Psoas muscle (tissue), 8 donors: ENCODE measurements at regions of chr18 and their contacts with region 1.

Region 1: GRCh38 chr18:26993568-26993967 is 128.1 kb upstream of the AQP4 start:
- DNase-seq: no peak
- ATAC-seq: no peak
- H3K4me3 ChIP-seq: no peak overlapping the region
- H3K27ac ChIP-seq: no peak overlapping the region
- H3K4me1 ChIP-seq: no peaks in the 10 kb centered on the region
- H3K27me3 ChIP-seq: no peaks in the 10 kb centered on the region
- CTCF ChIP-seq: no peak

Region 2: DNA sequence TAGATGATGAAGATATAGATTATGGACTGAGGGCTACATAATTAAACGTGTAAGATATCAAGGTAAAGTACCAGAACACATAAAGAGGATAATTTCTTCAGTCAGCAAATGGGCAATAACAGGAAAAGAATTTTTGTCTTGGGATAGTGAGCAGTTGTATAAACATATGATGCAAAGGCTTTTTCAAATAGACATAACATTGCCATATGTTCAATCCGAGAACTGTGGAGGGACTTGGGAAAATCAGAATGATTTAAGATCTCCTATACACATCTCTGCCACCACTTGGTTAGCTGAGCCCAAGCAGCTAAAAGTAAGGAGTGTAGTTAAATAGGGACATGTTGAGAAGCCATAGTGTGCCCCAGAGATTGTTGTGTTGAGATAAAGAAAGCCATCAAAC is 1354.0 kb before region 1 on chr18:
- intact Hi-C with region 1: loop called in 1 of 2 experiments (anchors 5 kb)
- DNase-seq: no peak
- ATAC-seq: no peak
- H3K4me3 ChIP-seq: no peak overlapping the region
- H3K27ac ChIP-seq: no peak overlapping the region
- H3K4me1 ChIP-seq: no peaks in the 10 kb centered on the region
- H3K27me3 ChIP-seq: no peaks in the 10 kb centered on the region
- CTCF ChIP-seq: no peak

Region 3: GRCh38 chr18:26821181-26821580 is 172.4 kb before region 1 on chr18:
- intact Hi-C with region 1: loop called in 1 of 2 experiments (anchors 5 kb)
- DNase-seq: no peak
- ATAC-seq: no peak
- H3K4me3 ChIP-seq: no peak overlapping the region
- H3K27ac ChIP-seq: no peak overlapping the region
- H3K4me1 ChIP-seq: no peaks in the 10 kb centered on the region
- H3K27me3 ChIP-seq: no peaks in the 10 kb centered on the region
- CTCF ChIP-seq: no peak

Region 4: GRCh38 chr18:27143580-27144287 is 150.2 kb after region 1 on chr18:
- intact Hi-C with region 1: no loop called
- DNase-seq: peak in 1 of 2 donors; percentile 14
- ATAC-seq: peak in 3 of 4 donors; percentile 54 to 65 (median 58)
- H3K4me3 ChIP-seq: no peak overlapping the region
- H3K27ac ChIP-seq: no peak overlapping the region
- H3K4me1 ChIP-seq: no peaks in the 10 kb centered on the region
- H3K27me3 ChIP-seq: no peaks in the 10 kb centered on the region
- CTCF ChIP-seq: no peak